Sigmoid colon (tissue), 7 donors: ENCODE measurements at regions of chr1 and their contacts with region 1.

Region 1: GRCh38 chr1:115717541-115717940 is 51.0 kb downstream of the CASQ2 start:
- DNase-seq: peak; percentile 71
- H3K4me3 ChIP-seq: no peak overlapping the region
- H3K27ac ChIP-seq: no peak overlapping the region
- H3K4me1 ChIP-seq: no peaks in the 10 kb centered on the region
- H3K27me3 ChIP-seq: no peaks in the 10 kb centered on the region
- CTCF ChIP-seq: peak; percentile 51 to 68 (median 58)
- EP300 ChIP-seq: no peak
- POLR2A ChIP-seq: no peak

Region 2: GRCh38 chr1:115771847-115772457 is 54.4 kb after region 1 on chr1:
- intact Hi-C with region 1: loop called (anchors 2 kb)
- DNase-seq: peak; percentile 85
- H3K4me3 ChIP-seq: peak overlapping the region in 3 of 4 donors; percentile 8 to 35 (median 17)
- H3K27ac ChIP-seq: peak overlapping the region; percentile 53 to 86 (median 69)
- H3K4me1 ChIP-seq: peaks cover 0 to 22% (median 12%) of the 10 kb centered on the region in 4 donors
- H3K27me3 ChIP-seq: no peaks in the 10 kb centered on the region
- CTCF ChIP-seq: peak; percentile 66 to 84 (median 79)
- EP300 ChIP-seq: no peak
- POLR2A ChIP-seq: no peak

Region 3: GRCh38 chr1:116489231-116489697 is 771.7 kb after region 1 on chr1:
- intact Hi-C with region 1: no loop called
- DNase-seq: no peak
- H3K4me3 ChIP-seq: no peak overlapping the region
- H3K27ac ChIP-seq: no peak overlapping the region
- H3K4me1 ChIP-seq: peaks cover 0 to 3% (median 0%) of the 10 kb centered on the region in 4 donors
- H3K27me3 ChIP-seq: no peaks in the 10 kb centered on the region
- CTCF ChIP-seq: no peak
- EP300 ChIP-seq: no peak
- POLR2A ChIP-seq: no peak